Right cardiac atrium (tissue), 5 donors: ENCODE measurements at regions of chr22 and their contacts with region 1.

Region 1: DNA sequence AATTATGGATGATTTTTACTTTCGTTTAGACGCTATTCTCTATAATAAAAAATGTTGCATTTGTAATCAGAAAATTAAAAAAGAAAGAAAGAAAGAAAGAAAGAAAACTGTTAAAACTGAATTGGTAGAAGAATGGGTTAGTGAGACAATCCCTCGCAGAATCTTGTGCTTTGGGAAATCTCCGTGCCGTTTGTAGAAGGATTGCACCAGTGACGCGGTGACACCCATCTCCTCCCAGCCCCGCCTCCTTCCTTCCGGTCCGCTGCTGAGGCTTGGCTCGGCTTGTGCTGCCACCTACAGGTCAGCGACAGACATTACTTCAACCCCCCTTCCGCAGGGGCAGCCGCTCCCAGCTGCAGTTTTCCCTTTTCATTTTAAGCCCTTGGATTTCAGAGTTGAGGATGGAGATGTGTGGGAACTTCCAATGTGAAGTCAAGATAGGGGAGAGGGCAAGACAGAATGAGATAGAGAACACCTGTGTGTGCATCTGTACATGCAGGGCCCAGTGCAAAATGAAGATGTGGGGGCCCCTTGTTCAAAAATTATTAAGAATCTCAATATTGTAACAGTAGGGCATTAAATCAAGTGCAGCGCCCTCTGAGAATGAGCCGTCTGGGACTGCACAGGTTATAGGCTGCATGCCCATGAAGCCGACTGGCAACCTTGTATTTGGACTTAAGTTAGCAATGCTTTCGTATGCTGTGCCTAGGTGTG is 41.1 kb downstream of the TST start:
- DNase-seq: peak; percentile 92 to 96 (median 95)
- ATAC-seq: peak; percentile 96 to 97
- H3K4me3 ChIP-seq: peak overlapping the region; percentile 39
- H3K27ac ChIP-seq: no peak overlapping the region
- H3K4me1 ChIP-seq: no peaks in the 10 kb centered on the region
- H3K27me3 ChIP-seq: no peaks in the 10 kb centered on the region

Region 2: GRCh38 chr22:36781656-36782627 is 196.2 kb before region 1 on chr22:
- intact Hi-C with region 1: loop called in 2 of 4 experiments (anchors 5 to 10 kb)
- DNase-seq: peak; percentile 77 to 90 (median 90)
- ATAC-seq: peak; percentile 76 to 94
- H3K4me3 ChIP-seq: no peak overlapping the region
- H3K27ac ChIP-seq: no peak overlapping the region
- H3K4me1 ChIP-seq: no peaks in the 10 kb centered on the region
- H3K27me3 ChIP-seq: no peaks in the 10 kb centered on the region

Region 3: GRCh38 chr22:36873680-36874537 is 104.2 kb before region 1 on chr22:
- intact Hi-C with region 1: loop called in 2 of 4 experiments (anchors 10 kb)
- DNase-seq: peak in 1 of 3 donors; percentile 55
- ATAC-seq: peak; percentile 79 to 89
- H3K4me3 ChIP-seq: no peak overlapping the region
- H3K27ac ChIP-seq: peak overlapping the region; percentile 8
- H3K4me1 ChIP-seq: no peaks in the 10 kb centered on the region
- H3K27me3 ChIP-seq: no peaks in the 10 kb centered on the region

Region 4: GRCh38 chr22:37019309-37020125 is 41.4 kb after region 1 on chr22 and contains the starts of genes MPST and TST:
- intact Hi-C with region 1: no loop called
- DNase-seq: peak; percentile 85 to 95 (median 93)
- ATAC-seq: peak; percentile 87 to 88
- H3K4me3 ChIP-seq: peak within 1 kb of the TSS; percentile 69
- H3K27ac ChIP-seq: peak within 1 kb of the TSS; percentile 97
- H3K4me1 ChIP-seq: peaks cover 24% of the 10 kb centered on the region
- H3K27me3 ChIP-seq: no peaks in the 10 kb centered on the region
- total RNA-seq, gene MPST: 49.6 to 65.7 (median 54.2) TPM
- total RNA-seq, gene TST: 31.7 to 53.6 (median 36.6) TPM

Region 5: GRCh38 chr22:37098976-37099591 is 121.0 kb after region 1 on chr22:
- intact Hi-C with region 1: no loop called
- DNase-seq: no peak
- ATAC-seq: no peak
- H3K4me3 ChIP-seq: no peak overlapping the region
- H3K27ac ChIP-seq: no peak overlapping the region
- H3K4me1 ChIP-seq: no peaks in the 10 kb centered on the region
- H3K27me3 ChIP-seq: no peaks in the 10 kb centered on the region